ENCODE measurements at regions of chr15 and their contacts with region 1.

Region 1: GRCh38 chr15:61169904-61170695 is 59.0 kb downstream of the RORA start:
- DNase-seq: no peak
- H3K4me3 ChIP-seq: no peak overlapping the region
- H3K27ac ChIP-seq: no peak overlapping the region
- H3K4me1 ChIP-seq: peaks cover 13% of the 10 kb centered on the region
- H3K27me3 ChIP-seq: no peaks in the 10 kb centered on the region
- CTCF ChIP-seq: no peak
- POLR2A ChIP-seq: no peak

Region 2: GRCh38 chr15:61025308-61025707 is 144.8 kb before region 1 on chr15:
- CTCF ChIA-PET with region 1: no interaction called
- POLR2A ChIA-PET with region 1: no interaction called
- dilution Hi-C with region 1: no loop called
- intact Hi-C with region 1: no loop called
- DNase-seq: no peak
- H3K4me3 ChIP-seq: no peak overlapping the region
- H3K27ac ChIP-seq: no peak overlapping the region
- H3K4me1 ChIP-seq: no peaks in the 10 kb centered on the region
- H3K27me3 ChIP-seq: no peaks in the 10 kb centered on the region
- CTCF ChIP-seq: no peak
- POLR2A ChIP-seq: no peak

Region 3: DNA sequence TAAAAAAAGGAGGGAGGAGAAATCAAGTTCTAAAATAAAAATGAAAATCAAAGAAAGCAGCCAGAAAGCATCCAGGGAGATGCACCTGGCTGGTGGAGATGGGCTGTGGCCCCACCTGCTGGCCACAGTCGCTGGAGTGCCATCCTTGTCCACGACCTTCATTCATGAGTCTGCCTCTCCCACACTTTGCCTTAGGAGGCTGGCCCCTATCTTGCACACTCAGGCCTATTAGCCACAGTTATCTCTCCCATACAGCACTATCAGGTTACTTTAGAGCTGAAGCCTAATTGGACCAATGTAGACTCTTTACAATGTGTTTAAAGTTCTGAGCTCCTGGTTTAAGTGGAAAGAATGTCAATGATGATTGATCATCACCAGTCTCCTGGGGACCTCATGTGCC is 451.0 kb after region 1 on chr15:
- CTCF ChIA-PET with region 1: interaction called, 73 read pairs
- POLR2A ChIA-PET with region 1: no interaction called
- dilution Hi-C with region 1: no loop called
- intact Hi-C with region 1: loop called (anchors 1 kb)
- DNase-seq: peak; percentile 21
- H3K4me3 ChIP-seq: no peak overlapping the region
- H3K27ac ChIP-seq: no peak overlapping the region
- H3K4me1 ChIP-seq: no peaks in the 10 kb centered on the region
- H3K27me3 ChIP-seq: no peaks in the 10 kb centered on the region
- CTCF ChIP-seq: peak; percentile 39 to 69
- POLR2A ChIP-seq: no peak

Region 4: GRCh38 chr15:61644550-61644949 is 474.4 kb after region 1 on chr15:
- CTCF ChIA-PET with region 1: interaction called, 8 read pairs
- POLR2A ChIA-PET with region 1: no interaction called
- dilution Hi-C with region 1: no loop called
- intact Hi-C with region 1: loop called (anchors 1 kb)
- DNase-seq: no peak
- H3K4me3 ChIP-seq: no peak overlapping the region
- H3K27ac ChIP-seq: no peak overlapping the region
- H3K4me1 ChIP-seq: no peaks in the 10 kb centered on the region
- H3K27me3 ChIP-seq: no peaks in the 10 kb centered on the region
- CTCF ChIP-seq: no peak
- POLR2A ChIP-seq: no peak